MCF 10A (cell line): ENCODE measurements at regions of chr9 and their contacts with region 1.

Region 1: GRCh38 chr9:36102742-36103495 is 33.6 kb upstream of the GLIPR2 start:
- DNase-seq: peak; percentile 84
- H3K4me3 Mint-ChIP-seq: no peak overlapping the region
- H3K27ac Mint-ChIP-seq: no peak overlapping the region
- H3K4me1 Mint-ChIP-seq: no peaks in the 10 kb centered on the region
- H3K27me3 Mint-ChIP-seq: no peaks in the 10 kb centered on the region
- CTCF ChIP-seq: peak; percentile 66

Region 2: DNA sequence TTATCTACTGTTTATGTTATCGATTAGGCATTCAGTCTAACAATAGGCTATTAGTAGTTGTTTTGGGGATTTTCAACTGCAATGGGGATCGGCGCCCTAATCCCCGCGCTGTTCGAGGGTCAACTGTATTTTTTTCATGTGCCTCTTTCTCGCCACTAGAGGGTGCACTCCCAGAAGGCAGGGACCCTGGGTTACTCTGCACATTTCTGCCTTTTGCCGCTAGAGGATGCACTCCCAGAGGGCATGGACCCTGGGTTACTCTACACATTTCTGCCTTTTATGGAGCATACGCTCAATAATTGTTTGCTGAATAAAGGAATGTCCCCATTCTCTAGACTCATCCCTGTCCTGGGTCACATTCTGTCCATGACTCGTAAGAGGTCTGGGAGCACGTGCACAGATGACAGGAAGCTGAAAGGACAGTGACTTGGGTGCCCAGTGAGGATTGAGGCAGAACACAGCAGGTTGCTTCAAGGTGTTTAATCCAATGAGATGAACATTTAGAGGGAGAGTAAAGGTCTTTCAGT is 94.1 kb before region 1 on chr9:
- CTCF ChIA-PET with region 1: interaction called, 10 read pairs
- POLR2A ChIA-PET with region 1: no interaction called
- intact Hi-C with region 1: loop called (anchors 1 kb)
- DNase-seq: peak; percentile 82
- H3K4me3 Mint-ChIP-seq: no peak overlapping the region
- H3K27ac Mint-ChIP-seq: no peak overlapping the region
- H3K4me1 Mint-ChIP-seq: no peaks in the 10 kb centered on the region
- H3K27me3 Mint-ChIP-seq: peaks cover 97% of the 10 kb centered on the region
- CTCF ChIP-seq: peak; percentile 98

Region 3: GRCh38 chr9:36086442-36086841 is 16.5 kb before region 1 on chr9:
- CTCF ChIA-PET with region 1: interaction called, 18 read pairs
- POLR2A ChIA-PET with region 1: interaction called, 8 read pairs
- intact Hi-C with region 1: no loop called
- DNase-seq: no peak
- H3K4me3 Mint-ChIP-seq: no peak overlapping the region
- H3K27ac Mint-ChIP-seq: no peak overlapping the region
- H3K4me1 Mint-ChIP-seq: no peaks in the 10 kb centered on the region
- H3K27me3 Mint-ChIP-seq: no peaks in the 10 kb centered on the region
- CTCF ChIP-seq: no peak

Region 4: DNA sequence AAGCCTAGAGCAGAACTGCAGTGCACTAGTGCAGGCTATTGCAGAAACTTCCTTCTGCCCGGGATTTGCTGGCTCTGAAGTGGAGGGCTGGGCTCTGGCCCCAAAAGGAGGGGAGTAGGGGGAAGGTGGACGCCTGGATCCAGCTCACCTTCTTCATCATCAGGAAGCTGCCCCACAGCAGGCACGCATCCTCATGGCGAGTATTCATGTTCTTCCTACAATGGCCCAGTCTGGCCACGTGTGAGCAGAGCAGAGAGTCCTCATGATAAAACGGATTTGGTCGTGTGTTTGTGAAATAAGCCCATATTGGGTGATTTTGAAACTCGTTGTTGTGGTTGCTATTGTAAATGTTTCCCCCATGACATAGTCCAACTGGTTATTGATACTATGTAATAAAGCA is 25.4 kb after region 1 on chr9:
- CTCF ChIA-PET with region 1: interaction called, 16 read pairs
- POLR2A ChIA-PET with region 1: no interaction called
- intact Hi-C with region 1: no loop called
- DNase-seq: no peak
- H3K4me3 Mint-ChIP-seq: no peak overlapping the region
- H3K27ac Mint-ChIP-seq: no peak overlapping the region
- H3K4me1 Mint-ChIP-seq: no peaks in the 10 kb centered on the region
- H3K27me3 Mint-ChIP-seq: no peaks in the 10 kb centered on the region
- CTCF ChIP-seq: no peak

Region 5: GRCh38 chr9:36161187-36161586 is 58.3 kb after region 1 on chr9:
- CTCF ChIA-PET with region 1: interaction called, 106 read pairs
- POLR2A ChIA-PET with region 1: interaction called, 3 read pairs
- intact Hi-C with region 1: loop called (anchors 1 kb)
- DNase-seq: peak; percentile 17
- H3K4me3 Mint-ChIP-seq: no peak overlapping the region
- H3K27ac Mint-ChIP-seq: no peak overlapping the region
- H3K4me1 Mint-ChIP-seq: peaks cover 8% of the 10 kb centered on the region
- H3K27me3 Mint-ChIP-seq: no peaks in the 10 kb centered on the region
- CTCF ChIP-seq: no peak

Region 6: DNA sequence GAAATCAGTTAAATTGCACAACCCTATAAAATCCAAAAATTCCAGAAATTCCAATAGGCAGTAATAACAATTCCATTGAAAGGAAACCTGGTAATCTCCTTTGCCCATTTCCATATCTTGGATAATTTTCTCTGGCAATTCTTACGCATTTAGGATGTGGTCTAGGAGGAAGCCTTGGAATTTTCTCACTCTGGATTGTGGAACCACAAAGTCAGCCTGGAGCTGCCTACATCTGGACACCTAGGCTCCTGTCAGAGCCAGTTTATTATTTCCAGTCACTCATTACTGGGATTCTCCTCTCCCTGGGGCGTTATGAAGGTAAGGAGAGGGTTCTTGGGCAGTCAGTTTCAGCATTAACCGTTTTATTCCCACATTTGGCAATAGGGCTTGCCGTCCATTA is 195.7 kb after region 1 on chr9:
- CTCF ChIA-PET with region 1: no interaction called
- POLR2A ChIA-PET with region 1: no interaction called
- intact Hi-C with region 1: no loop called
- DNase-seq: no peak
- H3K4me3 Mint-ChIP-seq: no peak overlapping the region
- H3K27ac Mint-ChIP-seq: no peak overlapping the region
- H3K4me1 Mint-ChIP-seq: no peaks in the 10 kb centered on the region
- H3K27me3 Mint-ChIP-seq: no peaks in the 10 kb centered on the region
- CTCF ChIP-seq: no peak